OCI-LY7 (cell line): ENCODE measurements at regions of chr11 and their contacts with region 1.

Region 1: GRCh38 chr11:47269002-47269828 is 718 bp upstream of the MADD start:
- DNase-seq: peak; percentile 94
- H3K4me3 ChIP-seq: peak overlapping the region; percentile 78
- H3K27ac ChIP-seq: peak overlapping the region; percentile 78
- H3K4me1 ChIP-seq: peaks cover 53% of the 10 kb centered on the region
- CTCF ChIP-seq: peak; percentile 51

Region 2: DNA sequence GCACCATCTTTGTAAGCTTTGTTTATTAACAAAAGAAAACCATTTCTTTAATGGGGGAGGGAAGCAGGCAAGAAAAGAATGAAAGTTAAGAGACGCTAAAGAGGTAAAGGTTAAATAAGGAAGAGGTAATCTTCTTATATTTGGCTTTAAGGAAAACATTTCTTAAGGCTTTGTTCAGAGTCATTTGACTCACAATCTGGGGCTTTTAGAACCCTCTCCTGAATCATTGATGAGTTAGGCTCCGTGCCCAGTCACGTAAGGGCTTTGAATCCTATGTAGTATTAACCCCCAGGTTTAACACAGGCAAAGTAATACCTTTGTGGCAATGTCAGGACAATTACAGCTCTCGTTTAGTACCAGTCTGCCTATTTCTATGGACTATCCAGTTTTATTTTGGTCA is 26.8 kb after region 1 on chr11:
- CTCF ChIA-PET with region 1: no interaction called
- POLR2A ChIA-PET with region 1: interaction called, 10 read pairs
- intact Hi-C with region 1: no loop called
- DNase-seq: no peak
- H3K4me3 ChIP-seq: no peak overlapping the region
- H3K27ac ChIP-seq: no peak overlapping the region
- H3K4me1 ChIP-seq: no peaks in the 10 kb centered on the region
- CTCF ChIP-seq: no peak

Region 3: DNA sequence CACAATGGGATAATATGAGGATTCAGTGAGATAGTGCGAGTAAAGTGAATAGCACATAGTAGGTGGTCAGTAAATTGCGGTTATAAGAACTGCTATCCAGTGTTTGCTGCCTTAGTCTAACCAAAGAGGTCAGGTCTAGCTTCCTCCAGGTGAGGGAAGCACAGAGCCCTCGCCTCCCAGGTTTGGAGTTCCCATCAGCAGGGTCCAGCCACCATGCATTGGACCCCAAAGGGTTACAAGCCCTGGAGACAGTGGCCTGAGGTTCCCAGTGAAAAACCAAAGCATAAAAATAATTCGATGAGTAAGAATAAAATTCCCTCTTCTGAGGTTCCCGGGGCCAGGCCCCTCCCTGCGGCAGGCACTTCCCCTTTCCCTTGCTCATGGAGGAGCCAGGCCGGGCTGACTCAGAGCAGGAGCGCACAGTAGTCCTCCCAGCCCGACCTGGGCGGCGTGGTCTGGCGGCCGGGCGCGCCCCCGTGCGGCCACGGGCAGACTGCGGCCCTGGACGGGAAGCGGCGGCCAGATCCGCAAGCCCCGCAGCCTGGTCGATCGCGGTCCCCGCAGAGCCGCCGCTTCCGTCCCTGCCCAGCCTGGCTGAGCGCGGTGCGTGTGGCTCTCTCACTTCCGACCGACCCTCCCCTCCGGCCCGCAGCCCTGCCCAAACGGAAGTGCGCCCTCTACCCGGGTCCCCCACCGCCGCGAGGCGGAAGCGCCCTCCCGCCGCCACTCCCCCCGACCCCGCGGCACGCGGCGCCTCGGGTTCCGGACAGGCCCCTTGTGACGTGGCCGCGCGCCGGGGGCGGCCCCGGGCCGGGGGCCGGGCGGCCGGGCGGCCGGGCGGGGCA is 138.8 kb after region 1 on chr11 and contains the start of gene SLC39A13:
- CTCF ChIA-PET with region 1: interaction called, 6 read pairs
- POLR2A ChIA-PET with region 1: no interaction called
- intact Hi-C with region 1: loop called (anchors 1 kb)
- DNase-seq: peak; percentile 96
- H3K4me3 ChIP-seq: peak within 1 kb of the TSS; percentile 88
- H3K27ac ChIP-seq: peak within 1 kb of the TSS; percentile 80
- H3K4me1 ChIP-seq: peaks cover 54% of the 10 kb centered on the region
- CTCF ChIP-seq: peak; percentile 91
- total RNA-seq, gene SLC39A13: 31.6 and 31.8 TPM in 2 replicates

Region 4: GRCh38 chr11:47454180-47454644 is 185.0 kb after region 1 on chr11:
- CTCF ChIA-PET with region 1: no interaction called
- POLR2A ChIA-PET with region 1: no interaction called
- intact Hi-C with region 1: loop called (anchors 5 kb)
- DNase-seq: peak; percentile 88
- H3K4me3 ChIP-seq: no peak overlapping the region
- H3K27ac ChIP-seq: no peak overlapping the region
- H3K4me1 ChIP-seq: no peaks in the 10 kb centered on the region
- CTCF ChIP-seq: peak; percentile 87